GM18951 (cell line): ENCODE measurements at regions of chr6 and their contacts with region 1.

Region 1: DNA sequence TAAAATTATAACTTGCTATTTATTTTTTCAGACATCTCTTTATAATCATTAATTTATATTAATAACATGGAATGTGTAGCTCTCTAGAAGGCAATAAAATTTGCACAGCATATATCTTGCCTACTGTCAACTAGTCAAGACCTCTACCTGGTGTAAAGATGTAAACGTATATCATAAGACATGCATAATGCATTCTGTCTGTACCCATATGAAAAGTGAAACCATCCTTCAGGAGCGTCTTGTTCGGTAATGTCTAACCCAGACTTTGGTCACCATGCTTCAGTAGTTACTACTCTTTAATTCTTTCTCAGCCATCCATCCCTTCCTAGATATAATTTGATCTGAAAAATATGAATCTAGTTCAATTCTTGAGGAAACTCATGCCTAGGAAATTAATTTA is 21.0 kb downstream of the CEP43 start:
- POLR2A ChIP-seq: no peak

Region 2: GRCh38 chr6:166866839-166867637 is 153.2 kb before region 1 on chr6:
- in situ Hi-C with region 1: no loop called
- POLR2A ChIP-seq: no peak

Region 3: DNA sequence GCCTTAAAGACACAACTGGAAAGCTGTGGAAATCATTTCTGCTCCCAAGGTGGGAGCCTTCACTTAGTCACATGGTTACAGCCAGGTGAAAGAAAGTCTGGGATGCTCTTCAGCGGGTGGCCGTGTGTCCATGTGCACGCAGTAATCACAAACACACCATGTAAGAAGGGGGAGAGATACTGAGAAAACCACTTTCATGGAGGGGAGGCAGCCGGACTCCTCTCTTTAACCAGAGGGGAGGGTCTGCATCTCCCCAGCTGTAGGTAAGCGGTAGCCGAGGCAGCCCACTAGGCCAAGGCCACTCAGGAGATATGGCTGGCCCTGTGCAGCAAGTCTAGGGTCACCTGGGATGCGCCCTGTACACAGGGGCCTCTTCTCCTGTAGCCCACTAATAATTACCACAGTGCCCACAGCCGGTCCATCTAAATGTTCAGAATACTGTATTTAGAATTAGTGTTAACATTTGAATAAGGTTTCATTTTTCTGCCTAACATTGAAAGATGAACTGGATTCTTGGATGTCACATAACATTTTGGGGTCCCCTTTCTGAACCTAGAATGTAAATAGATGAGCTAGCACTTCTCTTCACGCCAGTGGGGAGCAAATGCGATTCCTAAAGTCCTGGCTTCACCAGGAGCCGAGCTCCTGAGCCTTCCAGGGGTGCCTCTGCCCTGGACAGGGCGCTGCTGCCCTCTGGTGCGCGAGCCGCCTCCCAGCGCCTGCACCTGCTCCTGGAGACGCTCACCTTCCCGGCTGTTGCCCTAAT is 121.6 kb after region 1 on chr6:
- in situ Hi-C with region 1: loop called (anchors 25 kb)
- POLR2A ChIP-seq: no peak

Region 4: DNA sequence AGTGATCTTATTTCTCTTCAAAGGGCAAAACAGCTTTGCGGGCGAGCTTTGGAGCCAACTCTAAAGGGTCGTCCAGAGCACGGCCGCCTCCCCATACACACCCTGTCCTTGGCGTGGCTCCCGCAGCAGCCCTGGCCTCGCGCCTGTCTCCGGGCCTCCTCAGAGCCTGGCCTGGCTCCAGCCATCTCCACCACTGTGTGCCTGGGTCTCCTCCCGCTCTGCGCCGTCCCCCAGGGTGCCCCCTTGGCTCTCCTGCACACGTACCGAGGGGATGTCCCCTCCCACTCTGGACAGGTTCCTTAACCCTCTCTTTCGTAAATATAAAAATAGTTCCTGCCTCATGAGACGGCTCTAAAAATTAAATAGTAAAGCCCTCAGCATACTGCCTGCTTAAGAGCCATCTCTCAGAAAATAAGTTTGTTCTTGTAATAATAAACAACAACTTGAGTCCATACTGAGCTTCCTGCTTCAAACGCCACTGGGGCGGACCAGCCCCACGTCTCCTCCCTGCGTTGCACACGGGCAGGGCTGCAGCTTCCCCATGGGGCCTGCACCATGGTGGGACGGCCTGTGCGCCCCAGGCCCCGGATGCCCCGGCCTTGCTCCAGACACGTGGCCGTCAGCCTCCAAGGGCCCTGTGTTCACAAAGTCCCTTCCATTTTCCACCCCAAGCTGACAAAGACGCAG is 530.9 kb after region 1 on chr6:
- in situ Hi-C with region 1: no loop called
- POLR2A ChIP-seq: no peak